ENCODE measurements at regions of chr18 and their contacts with region 1.

Region 1: GRCh38 chr18:54860941-54861340 is 32.7 kb downstream of the RAB27B start:
- DNase-seq: no peak
- ATAC-seq: no peak
- H3K4me3 ChIP-seq: no peak overlapping the region
- H3K27ac ChIP-seq: no peak overlapping the region
- H3K4me1 ChIP-seq: no peaks in the 10 kb centered on the region; a peak in 1 of 5 replicates
- H3K27me3 ChIP-seq: no peaks in the 10 kb centered on the region
- CTCF ChIP-seq: no peak
- EP300 ChIP-seq: no peak
- POLR2A ChIP-seq: no peak
- RAD21 ChIP-seq: no peak

Region 2: DNA sequence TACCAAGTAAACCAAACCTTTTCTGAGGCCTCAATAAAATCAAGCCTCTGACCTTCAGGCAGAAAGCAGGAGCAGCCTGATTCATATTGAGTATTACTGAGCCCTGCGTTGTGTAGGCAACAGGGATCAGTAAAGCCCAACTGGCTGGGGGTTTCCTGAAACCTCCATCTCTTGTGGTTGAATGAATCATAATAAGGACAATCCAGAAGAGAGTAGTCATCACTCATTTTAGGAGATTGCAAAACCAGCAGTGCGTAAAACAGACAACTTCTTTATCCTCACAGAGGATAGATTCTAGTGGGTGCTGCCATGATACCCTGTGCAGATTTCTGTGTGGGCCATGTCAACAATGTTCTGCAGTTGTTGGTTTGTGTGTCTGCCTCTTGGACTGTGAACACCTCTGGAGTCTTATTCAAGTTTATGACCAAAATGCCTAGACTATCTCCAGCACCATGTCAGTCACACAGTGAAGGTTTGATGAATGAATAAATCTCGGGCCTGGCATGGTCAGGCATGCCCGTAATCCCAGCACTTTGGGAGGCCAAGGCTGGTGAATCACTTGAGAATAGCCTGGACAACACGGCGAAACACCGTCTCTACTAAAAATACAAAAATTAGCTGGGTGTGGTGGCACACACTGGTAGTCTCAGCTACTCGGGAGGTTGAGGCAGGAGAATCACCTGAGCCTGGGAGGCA is 84.5 kb before region 1 on chr18:
- CTCF ChIA-PET with region 1: no interaction called
- POLR2A ChIA-PET with region 1: no interaction called
- in situ Hi-C with region 1: no loop called
- intact Hi-C with region 1: loop called (anchors 10 kb)
- DNase-seq: peak in 2 of 4 experiments; percentile 3 to 23
- ATAC-seq: no peak; the same call in 2 of the 3 replicates
- H3K4me3 ChIP-seq: no peak overlapping the region
- H3K27ac ChIP-seq: no peak overlapping the region; the same call in 2 of the 3 replicates
- H3K4me1 ChIP-seq: peaks cover 0 to 2% of the 10 kb centered on the region in 2 experiments; a peak in 2 of 5 replicates
- H3K27me3 ChIP-seq: no peaks in the 10 kb centered on the region
- CTCF ChIP-seq: no peak
- EP300 ChIP-seq: no peak
- POLR2A ChIP-seq: no peak
- RAD21 ChIP-seq: no peak

Region 3: DNA sequence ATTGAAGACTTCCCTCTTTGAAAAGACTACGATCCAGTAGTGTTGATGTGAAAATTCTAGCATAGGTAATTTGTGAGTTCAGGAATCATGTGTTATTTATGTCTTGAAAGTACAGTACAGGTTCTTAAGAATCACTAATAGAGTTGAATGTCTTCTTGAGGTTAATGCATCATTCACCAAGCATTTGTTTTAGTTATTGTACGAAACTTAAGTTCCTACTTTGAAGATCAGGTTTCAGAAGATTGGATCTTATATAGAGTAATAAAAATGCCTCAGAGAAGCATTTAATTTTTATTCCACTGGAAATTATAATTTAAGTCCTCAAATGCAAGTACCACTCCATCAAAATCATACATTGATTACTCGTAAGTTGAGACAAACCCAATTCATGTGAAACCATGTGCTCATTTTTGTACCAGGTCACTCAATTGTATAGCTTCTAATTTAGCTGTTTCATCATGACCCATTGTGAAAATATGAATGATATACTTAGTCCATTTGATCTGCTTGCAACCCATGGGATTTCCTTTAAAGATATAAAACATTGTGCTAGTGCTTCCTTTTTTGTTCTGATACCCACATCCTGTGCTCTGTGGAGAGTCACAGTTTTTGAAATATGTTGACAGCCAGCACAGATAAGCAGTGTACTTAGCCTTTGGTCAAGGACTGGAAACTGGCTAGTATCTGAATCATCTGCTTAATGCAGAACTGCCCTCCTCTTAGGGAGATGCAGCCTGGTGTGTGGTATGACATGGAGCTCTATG is 55.2 kb before region 1 on chr18:
- CTCF ChIA-PET with region 1: no interaction called
- POLR2A ChIA-PET with region 1: no interaction called
- in situ Hi-C with region 1: no loop called
- intact Hi-C with region 1: no loop called
- DNase-seq: peak; percentile 4 to 81 (median 32)
- ATAC-seq: peak; percentile 95
- H3K4me3 ChIP-seq: no peak overlapping the region
- H3K27ac ChIP-seq: peak overlapping the region; percentile 57; the same call in 2 of the 3 replicates
- H3K4me1 ChIP-seq: peaks cover 0 to 10% of the 10 kb centered on the region in 2 experiments; a peak in 3 of 5 replicates
- H3K27me3 ChIP-seq: no peaks in the 10 kb centered on the region
- CTCF ChIP-seq: no peak
- EP300 ChIP-seq: peak; percentile 79
- POLR2A ChIP-seq: no peak
- RAD21 ChIP-seq: no peak

Measured in K562 (cell line).